Esophagus muscularis mucosa (tissue), 4 donors: ENCODE measurements at regions of chr10 and their contacts with region 1.

Region 1: DNA sequence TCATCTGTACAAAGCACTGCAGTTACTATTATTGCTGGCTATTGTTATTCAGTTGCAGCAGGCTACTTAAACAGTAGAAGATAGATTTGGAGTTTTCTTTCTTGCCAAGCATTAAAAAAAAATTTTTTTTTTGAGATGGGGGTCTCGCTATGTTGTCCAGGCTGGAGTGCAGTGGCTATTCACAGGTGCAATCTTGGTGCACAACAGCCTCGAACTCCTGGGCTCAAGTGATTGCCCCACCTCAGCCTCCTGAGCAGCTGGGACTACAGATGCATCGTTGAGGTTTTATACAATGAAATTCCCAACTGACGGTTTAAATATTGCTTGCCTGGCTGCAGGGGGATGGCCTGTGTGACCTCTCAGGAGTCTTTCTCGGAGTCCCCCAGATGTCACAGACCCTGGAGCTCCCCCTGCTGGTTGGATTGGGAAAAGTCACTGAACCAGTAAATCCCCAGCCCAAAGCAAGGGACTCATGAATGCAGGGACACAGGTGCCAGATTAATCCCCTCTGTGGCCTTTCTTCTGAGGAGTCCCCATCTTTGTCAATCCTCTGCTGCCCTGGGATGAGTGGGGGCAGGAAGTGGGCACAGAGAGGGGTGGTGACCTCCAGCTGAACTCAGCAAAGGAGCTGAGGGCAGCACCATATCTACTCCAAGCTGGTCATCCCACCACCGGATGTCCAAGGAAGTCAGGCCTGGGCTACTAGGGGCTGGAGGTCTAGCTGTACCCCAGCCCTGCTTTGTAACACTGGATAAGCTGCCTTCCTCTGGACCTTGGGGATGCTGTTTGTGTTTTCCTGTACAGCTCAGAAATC is 149.6 kb downstream of the C10orf105 start:
- DNase-seq: peak; percentile 94
- H3K4me3 ChIP-seq: no peak overlapping the region
- H3K27ac ChIP-seq: no peak overlapping the region
- H3K4me1 ChIP-seq: peaks cover 0 to 5% (median 2%) of the 10 kb centered on the region in 4 donors
- H3K27me3 ChIP-seq: no peaks in the 10 kb centered on the region
- CTCF ChIP-seq: peak; percentile 87 to 90 (median 88)
- EP300 ChIP-seq: no peak
- POLR2A ChIP-seq: no peak

Region 2: DNA sequence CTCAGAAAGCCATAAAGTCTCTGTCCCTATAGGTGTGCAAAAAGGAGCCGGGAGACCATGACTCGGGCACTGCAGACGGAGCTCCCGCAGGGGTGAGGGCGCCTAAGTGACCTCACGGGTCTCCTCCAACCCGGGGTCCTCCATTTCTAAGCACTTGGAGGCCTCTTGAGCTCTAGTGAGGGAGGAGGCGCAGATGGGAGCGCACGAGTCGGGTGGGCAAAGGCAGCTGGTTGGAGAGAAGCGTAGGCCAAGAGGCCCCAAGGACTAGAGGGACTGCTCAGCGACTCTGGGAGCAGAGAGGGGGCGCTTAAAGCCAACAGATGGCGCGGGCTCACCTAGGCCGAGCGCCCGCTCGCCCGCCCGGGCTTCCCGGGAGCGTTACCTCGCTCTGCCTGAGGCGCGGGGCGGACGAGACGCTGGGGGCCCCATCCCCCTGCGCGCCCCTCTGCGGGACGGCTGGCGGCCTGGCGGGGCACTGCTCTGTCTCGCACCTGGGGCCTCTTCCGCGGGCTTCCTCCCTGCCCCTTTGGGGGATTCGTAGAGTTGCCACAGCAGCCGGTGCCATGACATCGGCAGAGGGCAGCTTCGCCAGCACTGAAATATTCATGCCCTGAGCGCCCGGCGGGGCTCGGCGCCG is 173.8 kb before region 1 on chr10:
- intact Hi-C with region 1: loop called (anchors 2 kb)
- DNase-seq: no peak
- H3K4me3 ChIP-seq: peak overlapping the region; percentile 70 to 85 (median 74)
- H3K27ac ChIP-seq: peak overlapping the region; percentile 77 to 86 (median 79)
- H3K4me1 ChIP-seq: peaks cover 20 to 32% (median 26%) of the 10 kb centered on the region in 4 donors
- H3K27me3 ChIP-seq: peaks cover 0 to 34% (median 0%) of the 10 kb centered on the region in 4 donors
- CTCF ChIP-seq: peak; percentile 75 to 82 (median 82)
- EP300 ChIP-seq: no peak
- POLR2A ChIP-seq: no peak

Region 3: DNA sequence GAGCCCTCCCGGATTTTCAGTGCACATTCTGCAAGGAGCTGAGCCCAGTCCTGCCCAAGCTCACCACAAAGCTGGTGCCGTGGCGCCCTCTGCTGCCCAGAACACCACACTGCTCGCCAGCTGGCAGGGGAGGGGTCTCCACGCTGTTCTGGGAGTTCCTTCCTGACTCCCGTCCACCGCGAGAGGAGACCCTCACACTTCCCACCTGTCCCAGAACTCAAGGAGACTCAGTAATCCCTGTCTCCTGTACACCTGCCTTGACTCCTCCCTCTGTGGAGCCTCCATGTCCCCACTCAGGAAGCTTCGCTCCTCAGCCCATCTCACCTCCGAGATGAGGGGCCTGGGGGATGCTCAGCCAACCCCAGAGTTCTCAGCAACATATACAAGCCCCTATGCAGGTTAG is 138.3 kb after region 1 on chr10:
- intact Hi-C with region 1: loop called (anchors 5 kb)
- DNase-seq: no peak
- H3K4me3 ChIP-seq: no peak overlapping the region
- H3K27ac ChIP-seq: no peak overlapping the region
- H3K4me1 ChIP-seq: peaks cover 13 to 28% (median 21%) of the 10 kb centered on the region in 4 donors
- H3K27me3 ChIP-seq: no peaks in the 10 kb centered on the region
- CTCF ChIP-seq: peak; percentile 79 to 93 (median 90)
- EP300 ChIP-seq: no peak
- POLR2A ChIP-seq: no peak

Region 4: DNA sequence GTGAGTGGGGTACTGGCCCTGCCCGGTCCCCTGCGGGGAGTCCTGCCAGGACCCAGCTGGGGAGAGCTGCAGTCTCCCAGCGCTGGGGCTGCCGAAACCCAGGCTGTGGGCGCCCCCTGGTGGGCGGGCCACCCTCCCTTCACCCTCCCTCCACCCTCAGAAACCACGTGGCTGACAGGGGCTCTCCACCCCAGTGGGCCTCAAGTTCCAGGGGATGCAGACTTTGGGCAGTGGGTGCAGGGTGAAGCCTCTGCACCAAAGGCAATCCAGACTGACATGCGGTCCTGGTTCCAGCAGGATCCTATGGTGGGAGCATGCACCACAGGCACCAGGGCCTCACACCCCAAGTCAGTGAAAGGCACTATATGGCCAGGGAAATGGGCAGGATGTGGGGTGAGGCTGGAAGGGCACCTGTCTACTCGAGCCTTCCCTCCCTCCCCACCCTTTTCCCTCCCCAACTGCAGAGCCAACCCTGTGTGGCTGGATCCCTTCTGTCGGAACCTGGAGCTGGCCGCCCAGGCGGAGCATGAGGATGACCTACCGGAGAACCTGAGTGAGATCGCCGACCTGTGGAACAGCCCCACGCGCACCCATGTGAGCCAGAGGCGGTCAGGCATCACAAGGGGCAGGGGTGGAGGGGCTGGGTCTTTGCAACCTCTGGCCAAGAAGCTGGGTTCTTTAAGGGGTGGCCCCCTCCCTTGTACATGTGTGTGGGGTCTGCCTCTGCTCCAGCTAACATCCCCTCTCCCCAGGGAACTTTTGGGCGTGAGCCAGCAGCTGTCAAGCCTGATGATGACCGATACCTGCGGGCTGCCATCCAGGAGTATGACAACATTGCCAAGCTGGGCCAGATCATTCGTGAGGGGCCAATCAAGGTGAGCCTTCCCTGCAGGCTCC is 242.3 kb after region 1 on chr10:
- intact Hi-C with region 1: loop called (anchors 10 kb)
- DNase-seq: no peak
- H3K4me3 ChIP-seq: no peak overlapping the region
- H3K27ac ChIP-seq: no peak overlapping the region
- H3K4me1 ChIP-seq: peaks cover 21 to 41% (median 31%) of the 10 kb centered on the region in 4 donors
- H3K27me3 ChIP-seq: no peaks in the 10 kb centered on the region
- CTCF ChIP-seq: peak; percentile 73 to 95 (median 85)
- EP300 ChIP-seq: no peak
- POLR2A ChIP-seq: no peak